ENCODE measurements at regions of chr17 and their contacts with region 1.

Region 1: DNA sequence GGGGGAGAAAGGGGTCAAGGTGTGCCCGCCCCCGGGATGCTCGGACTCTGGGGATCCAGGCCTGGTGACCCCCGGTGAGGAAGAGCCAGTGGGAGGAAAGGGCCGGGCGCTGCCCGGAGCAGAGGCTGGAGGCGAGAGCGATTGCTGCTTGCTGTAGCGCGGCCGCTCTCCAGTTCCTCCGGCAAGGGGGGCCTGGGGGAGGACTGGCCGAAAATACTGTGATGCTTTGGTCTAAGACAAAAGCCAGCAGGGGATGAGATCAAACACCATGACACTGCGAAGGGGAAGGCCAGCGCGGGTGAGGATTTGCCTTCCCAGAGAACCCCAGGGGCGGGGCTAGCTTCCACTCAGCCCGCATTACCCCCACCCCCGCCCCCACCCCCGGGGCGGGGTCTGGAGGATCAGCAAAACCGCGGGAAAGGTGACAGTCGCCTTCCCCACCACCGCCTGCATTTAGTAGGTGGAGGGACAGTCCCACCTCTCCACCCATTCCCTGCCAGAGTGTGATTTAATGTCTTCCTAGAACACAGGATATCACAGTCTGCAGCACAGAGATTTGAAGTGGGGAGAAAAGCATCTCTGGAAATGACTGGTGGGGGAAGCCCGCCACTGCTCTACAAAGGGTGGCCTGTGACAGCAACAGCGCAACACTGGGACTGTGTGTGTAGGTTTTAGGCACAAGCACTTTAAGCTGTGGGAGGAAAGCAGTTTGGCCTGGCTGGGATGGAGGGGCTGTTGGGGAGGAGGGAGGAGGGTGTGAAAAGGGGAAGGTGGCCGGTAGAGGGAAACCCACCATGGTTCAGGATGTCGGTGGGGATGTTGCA is 25.7 kb downstream of the MRC2 start:
- DNase-seq: peak; percentile 31
- ATAC-seq: peak; percentile 44
- H3K4me3 ChIP-seq: peak overlapping the region; percentile 34
- H3K27ac ChIP-seq: peak overlapping the region; percentile 60
- H3K4me1 ChIP-seq: peaks cover 30% of the 10 kb centered on the region
- H3K27me3 ChIP-seq: no peaks in the 10 kb centered on the region
- CTCF ChIP-seq: no peak
- POLR2A ChIP-seq: no peak
- RAD21 ChIP-seq: no peak

Region 2: DNA sequence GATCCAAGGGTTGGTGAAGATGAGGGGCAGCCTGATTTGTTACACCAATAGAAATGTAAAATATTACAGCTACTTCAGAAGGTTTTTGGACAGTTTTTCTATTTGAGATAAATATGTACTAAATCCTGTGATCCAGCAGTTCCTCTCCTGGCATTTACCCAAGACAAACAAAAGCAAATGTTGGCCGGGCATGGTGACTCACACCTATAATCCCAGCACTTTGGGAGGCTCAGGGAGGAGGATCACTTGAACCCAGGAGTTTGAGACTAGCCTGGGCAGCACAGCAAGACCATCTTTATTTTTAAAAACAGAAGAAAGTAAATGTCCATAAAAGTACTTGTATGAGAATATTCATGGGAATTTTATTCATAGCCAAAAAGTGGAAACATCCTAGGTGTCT is 90.6 kb before region 1 on chr17:
- CTCF ChIA-PET with region 1: interaction called, 3 read pairs
- POLR2A ChIA-PET with region 1: no interaction called
- dilution Hi-C with region 1: no loop called
- in situ Hi-C with region 1: no loop called
- intact Hi-C with region 1: loop called (anchors 10 kb)
- DNase-seq: peak; percentile 68
- ATAC-seq: no peak
- H3K4me3 ChIP-seq: no peak overlapping the region
- H3K27ac ChIP-seq: no peak overlapping the region
- H3K4me1 ChIP-seq: peaks cover 7% of the 10 kb centered on the region
- H3K27me3 ChIP-seq: no peaks in the 10 kb centered on the region
- CTCF ChIP-seq: no peak
- POLR2A ChIP-seq: no peak
- RAD21 ChIP-seq: no peak

Region 3: GRCh38 chr17:62671583-62672312 is 18.5 kb after region 1 on chr17:
- CTCF ChIA-PET with region 1: no interaction called
- POLR2A ChIA-PET with region 1: no interaction called
- dilution Hi-C with region 1: no loop called
- in situ Hi-C with region 1: no loop called
- intact Hi-C with region 1: no loop called
- DNase-seq: no peak
- ATAC-seq: no peak
- H3K4me3 ChIP-seq: no peak overlapping the region
- H3K27ac ChIP-seq: no peak overlapping the region
- H3K4me1 ChIP-seq: no peaks in the 10 kb centered on the region
- H3K27me3 ChIP-seq: no peaks in the 10 kb centered on the region
- CTCF ChIP-seq: no peak
- POLR2A ChIP-seq: no peak
- RAD21 ChIP-seq: no peak

Region 4: GRCh38 chr17:62750631-62751358 is 97.6 kb after region 1 on chr17:
- CTCF ChIA-PET with region 1: no interaction called
- POLR2A ChIA-PET with region 1: no interaction called
- dilution Hi-C with region 1: no loop called
- in situ Hi-C with region 1: no loop called
- intact Hi-C with region 1: no loop called
- DNase-seq: peak; percentile 24
- ATAC-seq: no peak
- H3K4me3 ChIP-seq: no peak overlapping the region
- H3K27ac ChIP-seq: no peak overlapping the region
- H3K4me1 ChIP-seq: peaks cover 11% of the 10 kb centered on the region
- H3K27me3 ChIP-seq: no peaks in the 10 kb centered on the region
- CTCF ChIP-seq: no peak
- POLR2A ChIP-seq: no peak
- RAD21 ChIP-seq: no peak

Region 5: DNA sequence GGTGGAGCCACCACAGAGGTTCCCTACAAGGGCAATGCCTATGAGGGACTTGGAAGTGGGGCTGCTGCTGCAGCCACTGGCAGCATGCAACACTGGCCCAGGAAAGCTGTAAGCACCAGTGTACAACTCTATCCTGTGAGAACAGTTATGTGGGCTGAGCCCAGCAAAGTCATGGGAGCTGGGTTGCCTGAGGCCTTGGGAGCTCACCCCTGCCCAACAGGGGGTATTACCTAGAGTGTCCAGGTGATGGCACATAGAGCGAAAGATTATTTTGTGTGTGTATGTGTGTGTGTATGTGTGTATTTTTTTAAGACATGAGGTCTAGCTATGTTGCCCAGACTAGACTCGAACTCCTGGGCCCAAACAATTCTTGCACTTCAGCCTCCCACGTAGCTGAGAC is 369.9 kb after region 1 on chr17:
- CTCF ChIA-PET with region 1: no interaction called
- POLR2A ChIA-PET with region 1: no interaction called
- dilution Hi-C with region 1: no loop called
- in situ Hi-C with region 1: no loop called
- intact Hi-C with region 1: no loop called
- DNase-seq: no peak
- ATAC-seq: no peak
- H3K4me3 ChIP-seq: no peak overlapping the region
- H3K27ac ChIP-seq: no peak overlapping the region
- H3K4me1 ChIP-seq: peaks cover 2% of the 10 kb centered on the region; the same call in 1 of the 2 replicates
- H3K27me3 ChIP-seq: no peaks in the 10 kb centered on the region
- CTCF ChIP-seq: no peak
- POLR2A ChIP-seq: no peak
- RAD21 ChIP-seq: no peak

Measured in IMR-90 (cell line).